GM23248 (cell line): ENCODE measurements at regions of chr3 and their contacts with region 1.

Region 1: GRCh38 chr3:14203521-14204079 is 25.0 kb downstream of the LSM3 start:
- DNase-seq: peak; percentile 83
- H3K4me3 ChIP-seq: no peak overlapping the region
- H3K27ac ChIP-seq: no peak overlapping the region
- H3K4me1 ChIP-seq: peaks cover 31% of the 10 kb centered on the region
- H3K27me3 ChIP-seq: no peaks in the 10 kb centered on the region

Region 2: DNA sequence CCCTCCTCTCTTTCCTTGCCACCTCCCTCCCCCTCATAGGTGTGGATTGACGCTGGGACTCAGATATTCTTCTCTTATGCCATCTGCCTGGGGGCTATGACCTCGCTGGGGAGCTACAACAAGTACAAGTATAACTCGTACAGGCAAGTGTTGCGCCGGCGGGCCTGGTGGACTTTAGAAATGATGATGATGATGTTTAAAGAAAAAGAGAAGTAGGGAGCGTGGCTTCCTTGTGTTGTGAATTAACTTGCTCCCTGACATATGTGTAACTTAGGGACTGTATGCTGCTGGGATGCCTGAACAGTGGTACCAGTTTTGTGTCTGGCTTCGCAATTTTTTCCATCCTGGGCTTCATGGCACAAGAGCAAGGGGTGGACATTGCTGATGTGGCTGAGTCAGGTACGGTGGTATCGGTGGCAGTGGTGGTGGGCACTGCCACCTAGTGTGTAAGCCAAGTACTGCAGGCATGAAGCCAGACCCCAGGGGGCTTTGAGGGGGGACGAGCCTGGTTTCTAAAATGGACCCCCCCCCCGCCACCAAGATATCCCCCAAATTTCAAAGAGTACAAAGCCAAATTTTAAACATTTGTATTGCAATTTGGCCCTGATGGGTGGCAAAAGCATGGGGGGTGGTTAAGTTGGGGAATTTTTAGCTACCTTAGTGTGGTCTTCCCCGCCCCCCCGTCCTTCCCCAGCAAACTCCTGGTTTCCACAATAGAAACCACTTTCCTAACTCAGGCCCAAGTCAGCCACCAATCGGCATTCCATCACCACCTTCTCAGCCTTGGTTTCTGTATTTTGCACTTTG is 264.4 kb after region 1 on chr3:
- in situ Hi-C with region 1: loop called (anchors 5 kb)
- DNase-seq: peak; percentile 60
- H3K4me3 ChIP-seq: no peak overlapping the region
- H3K27ac ChIP-seq: no peak overlapping the region
- H3K4me1 ChIP-seq: peaks cover 19% of the 10 kb centered on the region
- H3K27me3 ChIP-seq: no peaks in the 10 kb centered on the region